ENCODE measurements at regions of chr9 and their contacts with region 1.

Region 1: DNA sequence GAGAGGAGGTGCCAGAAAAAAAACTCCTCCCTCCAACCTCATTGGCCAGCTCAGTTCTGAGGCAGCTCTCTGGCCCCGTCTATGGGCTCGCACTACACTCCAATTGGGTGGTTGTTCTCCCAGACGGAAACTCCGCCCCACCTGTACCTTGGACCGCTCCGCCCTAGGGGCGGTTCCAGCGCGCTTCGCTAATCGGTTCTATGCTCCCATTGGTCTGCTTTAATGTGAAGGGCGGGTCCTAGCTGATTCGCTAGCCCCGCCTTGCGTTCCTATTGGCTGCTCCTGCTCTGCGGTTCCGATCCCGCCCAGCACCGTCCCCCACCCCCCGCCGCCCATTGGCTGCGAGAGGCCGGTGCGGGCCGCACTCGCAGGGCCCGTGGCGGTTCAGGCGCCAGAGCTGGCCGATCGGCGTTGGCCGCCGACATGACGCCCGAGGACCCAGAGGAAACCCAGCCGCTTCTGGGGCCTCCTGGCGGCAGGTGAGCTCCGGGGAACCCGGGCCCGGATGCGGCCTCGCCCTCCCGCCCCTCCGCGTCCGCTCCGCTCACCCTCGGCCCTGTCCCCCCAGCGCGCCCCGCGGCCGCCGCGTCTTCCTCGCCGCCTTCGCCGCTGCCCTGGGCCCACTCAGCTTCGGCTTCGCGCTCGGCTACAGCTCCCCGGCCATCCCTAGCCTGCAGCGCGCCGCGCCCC is at the start of gene SLC2A8:
- DNase-seq: peak; percentile 97 to 99
- H3K4me3 ChIP-seq: peak within 1 kb of the TSS; percentile 68 to 90 (median 80)
- H3K27ac ChIP-seq: peak within 1 kb of the TSS; percentile 35; the same call in 1 of the 2 replicates
- H3K4me1 ChIP-seq: peaks cover 0 to 15% (median 6%) of the 10 kb centered on the region in 4 experiments; a peak in 6 of 7 replicates
- H3K27me3 ChIP-seq: peaks cover 0 to 6% (median 0%) of the 10 kb centered on the region in 4 experiments; a peak in 3 of 7 replicates
- CTCF ChIP-seq: 0 out of 4 replicates have a peak, but pooled peaks of 1 of the 3 experiments have one; percentile 6
- EP300 ChIP-seq: no peak
- POLR2A ChIP-seq: peak in 1 of 2 experiments; percentile 55; a peak in 2 of 3 replicates
- RAD21 ChIP-seq: peak in 1 of 2 experiments; percentile 25; a peak in 1 of 4 replicates
- total RNA-seq, gene SLC2A8: 24.6 and 25.6 TPM in 2 replicates

Region 2: DNA sequence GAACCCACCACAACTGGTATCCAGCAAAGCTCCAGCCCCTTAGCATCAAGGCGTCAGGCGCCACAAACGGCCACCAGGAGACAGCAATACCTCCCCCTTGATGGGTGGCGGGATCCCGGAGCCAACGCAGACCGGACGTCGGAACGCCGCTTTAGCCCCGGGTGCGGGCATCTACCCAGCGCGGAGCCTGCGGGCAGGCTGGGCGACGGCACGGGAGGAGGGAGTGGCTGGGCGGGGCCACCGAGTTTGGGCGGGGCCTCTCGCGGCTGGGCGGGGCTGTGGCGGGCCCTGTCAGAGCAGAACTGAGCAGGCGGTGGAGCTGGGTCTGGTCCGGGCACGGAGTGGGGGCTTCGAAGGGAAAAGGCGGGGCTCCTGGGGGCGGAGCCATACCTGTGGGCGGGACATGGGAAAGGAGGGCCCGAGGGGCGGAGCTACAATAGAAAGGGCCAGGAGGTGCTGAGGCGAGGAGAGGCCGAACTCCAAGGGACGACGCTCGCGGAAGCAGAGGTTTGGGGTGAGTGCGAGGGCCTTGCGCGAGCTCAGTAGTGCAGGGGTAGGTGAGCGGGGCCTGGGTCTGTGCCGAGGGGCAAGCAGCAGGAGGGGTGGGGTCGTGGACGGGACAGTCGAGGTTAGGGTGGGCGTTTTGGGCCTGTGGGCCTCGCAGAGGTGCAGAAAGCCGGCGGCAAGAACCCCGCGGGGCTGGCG is 172.6 kb before region 1 on chr9:
- CTCF ChIA-PET with region 1: interaction called, 13 read pairs
- POLR2A ChIA-PET with region 1: interaction called, 10 read pairs
- DNase-seq: peak; percentile 94 to 100
- H3K4me3 ChIP-seq: peak overlapping the region; percentile 55 to 80 (median 76)
- H3K27ac ChIP-seq: peak overlapping the region; percentile 80; the same call in 1 of the 2 replicates
- H3K4me1 ChIP-seq: peaks cover 0 to 13% (median 8%) of the 10 kb centered on the region in 4 experiments; a peak in 5 of 7 replicates
- H3K27me3 ChIP-seq: peaks cover 2 to 15% (median 13%) of the 10 kb centered on the region in 4 experiments; a peak in 6 of 7 replicates
- CTCF ChIP-seq: no peak
- EP300 ChIP-seq: no peak
- POLR2A ChIP-seq: peak; percentile 37 to 72; a peak in 2 of 3 replicates
- RAD21 ChIP-seq: peak in 1 of 2 experiments; percentile 24; a peak in 2 of 4 replicates

Region 3: DNA sequence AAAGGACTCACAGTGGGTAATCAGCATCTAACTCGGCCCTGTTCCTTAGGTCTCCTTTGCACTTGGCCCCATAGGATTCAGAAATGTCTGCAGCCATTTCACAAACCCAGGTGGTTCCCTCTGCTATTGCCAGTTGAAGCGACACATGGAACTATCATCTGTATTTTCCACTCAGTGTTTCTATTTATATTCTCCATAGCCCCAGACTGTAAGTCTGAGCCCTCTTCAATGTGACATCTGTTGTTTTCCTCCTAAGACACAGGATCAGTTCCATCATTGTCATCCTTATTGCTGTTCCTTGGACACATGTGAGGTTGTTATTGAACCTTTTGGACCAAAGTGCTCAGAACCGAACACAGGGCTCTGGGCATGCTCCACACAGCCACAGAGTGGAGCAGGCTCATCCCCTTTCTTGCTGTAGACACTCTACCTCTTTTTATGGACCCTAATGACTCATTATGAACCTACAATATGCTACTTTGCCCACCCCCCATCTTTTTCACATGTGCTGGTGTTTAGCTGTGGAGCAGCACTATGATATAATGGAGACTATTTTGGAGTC is 96.0 kb before region 1 on chr9:
- CTCF ChIA-PET with region 1: no interaction called
- POLR2A ChIA-PET with region 1: no interaction called
- DNase-seq: no peak
- H3K4me3 ChIP-seq: no peak overlapping the region
- H3K27ac ChIP-seq: no peak overlapping the region
- H3K4me1 ChIP-seq: no peaks in the 10 kb centered on the region
- H3K27me3 ChIP-seq: no peaks in the 10 kb centered on the region
- CTCF ChIP-seq: no peak
- EP300 ChIP-seq: no peak
- POLR2A ChIP-seq: no peak
- RAD21 ChIP-seq: no peak

Region 4: DNA sequence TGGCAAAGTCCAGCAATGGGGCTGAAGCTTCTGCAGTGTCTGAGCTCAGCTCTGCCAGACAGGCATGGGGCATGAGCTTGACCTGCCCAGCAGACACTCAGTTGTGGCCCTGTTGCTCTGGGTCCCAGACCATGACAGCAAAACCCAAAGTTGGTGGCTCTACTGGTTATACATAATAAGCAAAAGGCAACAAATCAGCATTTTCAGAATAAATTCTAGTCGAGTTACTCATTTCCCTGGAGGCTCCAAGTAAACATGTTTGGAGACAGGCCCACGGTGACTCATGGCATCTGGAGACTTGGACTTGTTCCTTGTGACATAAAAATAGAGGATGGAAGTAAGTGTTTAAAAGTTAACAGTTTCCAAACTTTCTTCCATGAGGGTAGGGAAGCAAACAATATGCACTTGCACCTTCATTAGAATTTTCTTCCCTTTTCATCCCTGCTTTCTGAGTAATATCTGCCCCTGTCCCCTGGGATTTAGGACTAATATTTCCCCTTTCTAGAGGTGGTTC is 60.2 kb before region 1 on chr9:
- CTCF ChIA-PET with region 1: no interaction called
- POLR2A ChIA-PET with region 1: no interaction called
- DNase-seq: no peak
- H3K4me3 ChIP-seq: no peak overlapping the region
- H3K27ac ChIP-seq: no peak overlapping the region
- H3K4me1 ChIP-seq: no peaks in the 10 kb centered on the region
- H3K27me3 ChIP-seq: no peaks in the 10 kb centered on the region
- CTCF ChIP-seq: no peak
- EP300 ChIP-seq: no peak
- POLR2A ChIP-seq: no peak
- RAD21 ChIP-seq: no peak

Region 5: DNA sequence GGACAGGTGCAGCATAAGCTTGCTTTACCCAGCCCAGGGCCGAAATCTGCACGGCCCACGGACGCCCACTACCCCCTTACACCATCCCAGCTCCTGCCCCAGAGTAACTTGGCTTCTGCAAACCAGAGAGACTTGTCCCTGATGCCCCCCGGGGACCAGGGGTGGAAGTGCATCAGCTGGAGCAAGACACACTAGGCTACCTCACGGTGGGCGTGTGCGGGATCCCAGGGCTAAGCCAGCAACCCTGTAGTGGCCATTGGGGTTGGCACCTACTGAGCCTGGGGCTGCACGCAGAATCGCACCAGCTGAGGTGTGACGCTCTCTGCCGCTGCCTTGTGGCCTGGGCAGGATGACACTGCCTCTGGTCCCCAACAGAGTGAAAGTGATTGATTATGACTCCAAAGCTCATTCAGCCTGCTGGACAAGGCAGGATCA is 21.1 kb after region 1 on chr9:
- CTCF ChIA-PET with region 1: interaction called, 21 read pairs
- POLR2A ChIA-PET with region 1: interaction called, 12 read pairs
- DNase-seq: peak; percentile 43 to 83
- H3K4me3 ChIP-seq: no peak overlapping the region
- H3K27ac ChIP-seq: no peak overlapping the region
- H3K4me1 ChIP-seq: peaks cover 0 to 8% (median 5%) of the 10 kb centered on the region in 4 experiments; a peak in 6 of 7 replicates
- H3K27me3 ChIP-seq: no peaks in the 10 kb centered on the region
- CTCF ChIP-seq: peak; percentile 65 to 76 (median 70)
- EP300 ChIP-seq: no peak
- POLR2A ChIP-seq: no peak
- RAD21 ChIP-seq: peak; percentile 63 to 70

Region 6: GRCh38 chr9:127423934-127424675 is 27.2 kb after region 1 on chr9 and contains the start of gene ZNF79:
- CTCF ChIA-PET with region 1: interaction called, 7 read pairs
- POLR2A ChIA-PET with region 1: interaction called, 12 read pairs
- DNase-seq: peak; percentile 82 to 95
- H3K4me3 ChIP-seq: peak within 1 kb of the TSS; percentile 87 to 96 (median 94)
- H3K27ac ChIP-seq: peak within 1 kb of the TSS; percentile 94
- H3K4me1 ChIP-seq: peaks cover 0 to 12% (median 6%) of the 10 kb centered on the region in 4 experiments; a peak in 5 of 7 replicates
- H3K27me3 ChIP-seq: no peaks in the 10 kb centered on the region
- CTCF ChIP-seq: no peak
- EP300 ChIP-seq: no peak
- POLR2A ChIP-seq: peak; percentile 80 to 92
- RAD21 ChIP-seq: no peak
- total RNA-seq, gene ZNF79: 7.4 and 7.6 TPM in 2 replicates